K562 (cell line): ENCODE measurements at regions of chr7 and their contacts with region 1.

Region 1: GRCh38 chr7:127708788-127709187 is 56.8 kb downstream of the SND1 start:
- DNase-seq: peak; percentile 65 to 86 (median 72)
- ATAC-seq: peak; percentile 97
- H3K4me3 ChIP-seq: no peak overlapping the region
- H3K27ac ChIP-seq: no peak overlapping the region
- H3K4me1 ChIP-seq: no peaks in the 10 kb centered on the region
- H3K27me3 ChIP-seq: no peaks in the 10 kb centered on the region
- CTCF ChIP-seq: peak; percentile 67 to 84 (median 77)
- EP300 ChIP-seq: no peak
- POLR2A ChIP-seq: no peak
- RAD21 ChIP-seq: peak; percentile 76 to 82

Region 2: GRCh38 chr7:127798023-127798422 is 89.2 kb after region 1 on chr7:
- CTCF ChIA-PET with region 1: no interaction called
- POLR2A ChIA-PET with region 1: no interaction called
- in situ Hi-C with region 1: no loop called
- intact Hi-C with region 1: loop called (anchors 5 kb)
- DNase-seq: peak; percentile 31 to 94 (median 60)
- ATAC-seq: peak; percentile 77
- H3K4me3 ChIP-seq: no peak overlapping the region
- H3K27ac ChIP-seq: peak overlapping the region; percentile 42
- H3K4me1 ChIP-seq: peaks cover 20 to 29% of the 10 kb centered on the region in 2 experiments
- H3K27me3 ChIP-seq: no peaks in the 10 kb centered on the region
- CTCF ChIP-seq: no peak
- EP300 ChIP-seq: peak; percentile 44
- POLR2A ChIP-seq: no peak
- RAD21 ChIP-seq: no peak

Region 3: DNA sequence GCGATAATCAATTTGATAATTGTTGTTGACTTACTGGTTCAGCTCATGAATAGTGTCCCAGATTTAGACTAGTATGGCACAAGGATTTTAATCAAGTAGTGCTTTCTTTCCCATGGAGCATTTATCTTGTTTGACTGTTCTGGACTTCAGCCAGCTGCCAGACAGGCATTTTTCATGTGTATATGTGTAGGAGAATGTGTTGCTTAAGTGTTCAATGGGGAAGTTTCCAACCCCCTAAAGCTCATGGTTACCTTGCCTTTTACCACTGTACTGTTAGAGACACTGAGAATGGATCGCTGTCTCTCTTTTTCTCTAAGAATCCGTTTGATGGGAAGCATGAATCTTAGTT is 218.5 kb after region 1 on chr7:
- CTCF ChIA-PET with region 1: no interaction called
- POLR2A ChIA-PET with region 1: no interaction called
- in situ Hi-C with region 1: no loop called
- intact Hi-C with region 1: loop called (anchors 10 kb)
- DNase-seq: peak in 1 of 4 experiments; percentile 27
- ATAC-seq: no peak; the same call in 2 of the 3 replicates
- H3K4me3 ChIP-seq: no peak overlapping the region
- H3K27ac ChIP-seq: no peak overlapping the region
- H3K4me1 ChIP-seq: no peaks in the 10 kb centered on the region; a peak in 1 of 5 replicates
- H3K27me3 ChIP-seq: no peaks in the 10 kb centered on the region
- CTCF ChIP-seq: no peak
- EP300 ChIP-seq: no peak
- POLR2A ChIP-seq: no peak
- RAD21 ChIP-seq: no peak

Region 4: DNA sequence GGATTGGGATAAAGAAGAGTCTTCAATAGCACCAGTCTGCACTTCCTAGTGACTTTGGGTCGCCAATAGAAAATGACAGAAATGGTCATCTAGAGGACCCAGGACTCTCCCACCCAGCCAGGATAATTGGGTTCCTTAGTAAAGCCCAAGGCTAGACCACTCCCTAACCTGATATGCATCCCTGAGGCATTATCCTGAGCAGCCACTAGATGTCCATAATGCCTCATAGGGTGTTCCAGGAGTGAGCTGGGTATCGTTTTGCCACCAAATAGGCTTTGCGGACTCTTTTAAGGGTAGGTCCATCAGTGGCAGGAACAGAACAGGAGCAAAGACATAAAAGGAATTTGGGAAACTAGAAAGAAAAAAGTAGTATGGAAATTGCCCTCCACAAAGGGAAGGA is 326.9 kb after region 1 on chr7:
- CTCF ChIA-PET with region 1: no interaction called
- POLR2A ChIA-PET with region 1: no interaction called
- in situ Hi-C with region 1: no loop called
- intact Hi-C with region 1: loop called (anchors 5 kb)
- DNase-seq: peak; percentile 42 to 61 (median 52)
- ATAC-seq: peak; percentile 92
- H3K4me3 ChIP-seq: no peak overlapping the region
- H3K27ac ChIP-seq: no peak overlapping the region
- H3K4me1 ChIP-seq: peaks cover 0 to 7% of the 10 kb centered on the region in 2 experiments; a peak in 1 of 5 replicates
- H3K27me3 ChIP-seq: no peaks in the 10 kb centered on the region
- CTCF ChIP-seq: peak; percentile 51 to 60 (median 59); a peak in 5 of 6 replicates
- EP300 ChIP-seq: no peak
- POLR2A ChIP-seq: no peak
- RAD21 ChIP-seq: peak; percentile 20 to 57; a peak in 2 of 4 replicates

Region 5: GRCh38 chr7:128135515-128136214 is 426.9 kb after region 1 on chr7:
- CTCF ChIA-PET with region 1: no interaction called
- POLR2A ChIA-PET with region 1: no interaction called
- in situ Hi-C with region 1: no loop called
- intact Hi-C with region 1: loop called (anchors 2 kb)
- DNase-seq: peak; percentile 81 to 98 (median 96)
- ATAC-seq: peak; percentile 96
- H3K4me3 ChIP-seq: peak overlapping the region; percentile 53
- H3K27ac ChIP-seq: no peak overlapping the region
- H3K4me1 ChIP-seq: peaks cover 16% of the 10 kb centered on the region in 2 experiments
- H3K27me3 ChIP-seq: peaks cover 25 to 39% of the 10 kb centered on the region in 2 experiments
- CTCF ChIP-seq: peak; percentile 87 to 94 (median 88)
- EP300 ChIP-seq: no peak
- POLR2A ChIP-seq: no peak
- RAD21 ChIP-seq: peak; percentile 77 to 90